A673 (cell line): ENCODE measurements at regions of chr12 and their contacts with region 1.

Region 1: GRCh38 chr12:54005853-54006686 is 2.7 kb upstream of the HOXC8 start:
- DNase-seq: peak; percentile 86
- H3K4me3 ChIP-seq: no peak overlapping the region
- H3K27ac ChIP-seq: no peak overlapping the region
- H3K4me1 ChIP-seq: peaks cover 71% of the 10 kb centered on the region
- H3K27me3 ChIP-seq: no peaks in the 10 kb centered on the region
- CTCF ChIP-seq: peak; percentile 95

Region 2: DNA sequence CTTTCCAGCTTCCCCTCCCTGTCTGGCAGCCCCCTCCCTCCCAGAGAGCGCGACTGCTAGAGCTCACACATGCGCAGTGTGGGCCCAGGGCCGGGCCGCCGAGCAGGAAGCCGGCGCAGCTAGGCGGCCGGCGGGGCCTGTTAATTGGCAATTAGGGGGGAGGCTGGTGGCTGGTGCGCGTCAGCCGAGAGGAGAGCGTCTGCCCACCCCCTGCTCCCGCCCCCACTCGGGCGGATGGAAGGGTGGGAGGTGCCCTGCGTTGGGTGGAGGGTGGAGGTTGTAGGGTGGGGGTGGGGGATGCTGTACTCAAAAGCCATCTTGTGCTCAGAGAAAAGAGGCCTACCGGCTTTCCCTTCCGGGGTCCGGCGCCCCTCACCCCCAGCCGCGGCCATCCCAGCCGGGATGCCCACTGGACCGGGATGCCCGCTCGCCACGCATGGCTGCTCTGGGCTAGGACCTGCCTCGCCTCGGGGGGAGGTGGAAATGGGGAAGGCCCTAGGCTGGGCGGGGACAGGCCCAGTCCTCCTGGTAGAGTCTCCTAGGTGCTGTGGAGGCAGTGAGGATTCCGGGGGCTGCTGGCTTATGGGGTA is 11.9 kb after region 1 on chr12:
- CTCF ChIA-PET with region 1: interaction called, 15 read pairs
- POLR2A ChIA-PET with region 1: interaction called, 14 read pairs
- intact Hi-C with region 1: no loop called
- DNase-seq: peak; percentile 99
- H3K4me3 ChIP-seq: peak overlapping the region; percentile 68
- H3K27ac ChIP-seq: peak overlapping the region; percentile 97
- H3K4me1 ChIP-seq: peaks cover 59% of the 10 kb centered on the region
- H3K27me3 ChIP-seq: no peaks in the 10 kb centered on the region
- CTCF ChIP-seq: no peak

Region 3: DNA sequence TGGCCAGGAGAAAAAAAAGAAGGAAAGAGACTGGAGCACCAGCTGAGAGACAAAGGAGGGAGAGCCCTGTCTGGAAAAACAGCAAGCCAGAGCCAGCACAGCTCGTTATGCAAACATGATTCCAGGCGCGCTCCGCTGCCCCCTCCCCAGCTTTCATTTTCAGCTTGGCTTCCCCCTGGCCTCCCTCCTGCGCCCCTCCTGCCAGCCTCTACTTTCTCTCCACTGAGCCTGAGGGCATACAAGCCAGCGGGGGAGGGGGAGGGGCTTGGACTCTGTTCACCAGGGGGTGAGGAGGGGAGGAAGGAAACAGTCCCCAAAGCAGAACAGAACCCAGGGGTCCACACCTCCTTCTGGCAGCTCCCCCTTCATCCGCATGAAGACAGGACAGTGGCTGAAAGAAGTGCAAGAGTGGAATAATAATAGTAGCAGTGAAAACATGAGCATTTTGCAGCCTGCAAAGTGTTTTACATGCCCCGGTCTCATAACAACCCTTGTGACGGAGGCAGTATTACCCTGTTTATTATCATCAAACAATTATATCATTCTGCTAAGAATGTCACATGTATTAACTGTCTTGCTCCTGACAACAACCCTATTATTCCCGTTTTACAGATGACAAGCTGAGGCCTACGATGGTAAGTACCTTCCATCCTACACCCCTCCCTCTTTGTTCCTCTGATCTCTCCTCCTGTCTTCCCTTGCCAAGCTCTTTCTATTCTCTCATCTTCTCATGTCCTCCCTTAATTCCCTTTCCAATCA is 158.5 kb after region 1 on chr12:
- CTCF ChIA-PET with region 1: interaction called, 13 read pairs
- POLR2A ChIA-PET with region 1: no interaction called
- intact Hi-C with region 1: no loop called
- DNase-seq: no peak
- H3K4me3 ChIP-seq: no peak overlapping the region
- H3K27ac ChIP-seq: no peak overlapping the region
- H3K4me1 ChIP-seq: peaks cover 33% of the 10 kb centered on the region
- H3K27me3 ChIP-seq: no peaks in the 10 kb centered on the region
- CTCF ChIP-seq: no peak

Region 4: GRCh38 chr12:54201001-54201794 is 195.1 kb after region 1 on chr12:
- CTCF ChIA-PET with region 1: interaction called, 33 read pairs
- POLR2A ChIA-PET with region 1: no interaction called
- intact Hi-C with region 1: loop called (anchors 2 kb)
- DNase-seq: peak; percentile 86
- H3K4me3 ChIP-seq: no peak overlapping the region
- H3K27ac ChIP-seq: no peak overlapping the region
- H3K4me1 ChIP-seq: peaks cover 16% of the 10 kb centered on the region
- H3K27me3 ChIP-seq: no peaks in the 10 kb centered on the region
- CTCF ChIP-seq: peak; percentile 97

Region 5: DNA sequence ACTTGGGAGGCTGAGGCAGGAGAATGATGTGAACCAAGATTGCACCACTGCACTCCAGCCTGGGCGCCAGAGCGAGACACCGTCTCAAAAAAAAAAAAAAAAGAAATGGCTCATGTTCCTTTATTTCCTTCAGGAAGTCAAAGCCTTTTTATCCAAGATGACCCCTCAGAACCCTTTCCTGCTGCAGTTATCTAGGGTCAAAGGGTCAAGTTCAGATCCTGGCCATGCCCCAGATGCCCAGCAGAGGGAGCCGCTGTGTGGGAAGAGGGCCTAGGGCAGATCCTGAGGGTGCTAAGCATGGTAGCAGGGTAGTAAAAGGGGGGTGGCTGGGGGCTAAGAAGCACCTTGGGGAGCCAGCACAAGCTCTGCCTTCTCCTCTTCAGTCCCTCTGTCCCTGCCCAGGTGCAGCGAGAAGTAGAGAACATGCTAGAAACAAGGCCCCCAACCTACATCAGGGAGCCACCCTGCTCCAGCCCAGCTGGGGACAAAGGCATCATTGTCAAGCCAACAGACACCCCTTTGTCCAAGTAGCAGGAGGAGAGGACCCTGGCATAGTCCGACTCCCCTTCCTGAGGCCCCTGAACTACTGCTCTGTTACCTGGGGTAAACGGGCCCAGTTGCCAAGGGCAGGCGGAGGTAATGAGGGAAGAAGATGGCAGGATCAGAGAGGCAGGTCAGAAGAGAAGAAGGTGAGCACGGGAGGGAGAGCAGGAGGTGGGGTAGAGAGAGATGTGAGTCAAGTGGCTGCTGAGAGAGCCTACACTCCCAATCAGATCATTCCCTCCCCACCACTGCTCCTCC is 288.3 kb after region 1 on chr12:
- CTCF ChIA-PET with region 1: no interaction called
- POLR2A ChIA-PET with region 1: interaction called, 19 read pairs
- intact Hi-C with region 1: no loop called
- DNase-seq: no peak
- H3K4me3 ChIP-seq: no peak overlapping the region
- H3K27ac ChIP-seq: no peak overlapping the region
- H3K4me1 ChIP-seq: no peaks in the 10 kb centered on the region
- H3K27me3 ChIP-seq: peaks cover under 1% of the 10 kb centered on the region
- CTCF ChIP-seq: peak; percentile 85